ENCODE measurements at regions of chr2 and their contacts with region 1.

Region 1: GRCh38 chr2:102010902-102011301 is 19.1 kb downstream of the IL1R2 start:
- DNase-seq: no peak
- H3K4me3 ChIP-seq: no peak overlapping the region
- H3K27ac ChIP-seq: peak overlapping the region in 2 of 4 donors; percentile 1 to 24
- H3K4me1 ChIP-seq: peaks cover 4 to 12% (median 5%) of the 10 kb centered on the region in 3 donors
- H3K27me3 ChIP-seq: no peaks in the 10 kb centered on the region
- CTCF ChIP-seq: no peak
- POLR2A ChIP-seq: no peak

Region 2: DNA sequence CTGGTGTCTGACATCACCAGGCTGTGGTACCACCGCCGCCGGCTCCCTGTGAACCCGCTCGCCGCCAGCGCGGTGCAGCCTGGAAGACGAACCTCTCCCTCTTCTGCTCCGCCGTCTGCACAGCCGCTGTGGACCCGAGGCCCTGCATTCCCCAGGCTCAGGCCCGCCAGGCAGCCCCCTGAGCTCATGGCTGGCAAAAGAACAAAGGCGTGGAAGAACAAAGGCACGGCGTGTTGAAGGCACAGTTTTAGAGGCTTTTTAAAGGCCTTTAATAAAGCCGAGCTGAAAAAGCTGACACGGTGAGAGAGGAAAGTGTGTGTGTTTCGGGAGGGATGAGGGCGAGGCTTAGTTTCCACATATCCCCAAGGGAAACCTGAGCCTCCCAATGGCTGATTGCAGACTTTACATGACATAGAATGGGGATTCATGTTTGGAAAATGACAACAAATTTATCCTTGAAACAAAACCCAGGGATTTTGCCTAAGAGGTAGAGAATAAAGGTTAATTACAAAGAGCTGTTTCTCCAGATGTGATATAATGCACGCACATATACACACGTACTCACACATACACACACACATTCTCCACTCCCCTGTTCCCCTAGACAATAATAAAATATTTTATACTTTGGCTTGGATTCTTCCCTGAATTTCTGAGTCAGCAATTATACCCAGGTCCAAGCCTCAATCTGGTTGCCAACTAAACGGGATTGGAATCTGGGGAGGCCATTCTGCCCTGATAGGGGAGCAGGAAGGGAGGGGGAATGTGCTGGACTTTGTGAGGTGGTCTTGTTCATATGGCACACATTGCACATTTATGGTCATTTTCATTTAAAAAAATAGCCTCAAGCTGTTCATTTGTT is 575.7 kb before region 1 on chr2:
- intact Hi-C with region 1: no loop called
- DNase-seq: no peak
- H3K4me3 ChIP-seq: peak overlapping the region in 1 of 4 donors; percentile 34
- H3K27ac ChIP-seq: no peak overlapping the region
- H3K4me1 ChIP-seq: peaks cover 0 to 13% (median 9%) of the 10 kb centered on the region in 3 donors
- H3K27me3 ChIP-seq: no peaks in the 10 kb centered on the region
- CTCF ChIP-seq: no peak
- POLR2A ChIP-seq: no peak

Region 3: GRCh38 chr2:101883863-101884262 is 127.0 kb before region 1 on chr2:
- intact Hi-C with region 1: loop called (anchors 10 kb)
- DNase-seq: no peak
- H3K4me3 ChIP-seq: no peak overlapping the region
- H3K27ac ChIP-seq: no peak overlapping the region
- H3K4me1 ChIP-seq: peaks cover 0 to 32% (median 0%) of the 10 kb centered on the region in 3 donors
- H3K27me3 ChIP-seq: no peaks in the 10 kb centered on the region
- CTCF ChIP-seq: peak; percentile 19 to 82 (median 76)
- POLR2A ChIP-seq: no peak

Region 4: GRCh38 chr2:101972621-101973434 is 38.1 kb before region 1 on chr2:
- intact Hi-C with region 1: no loop called
- DNase-seq: no peak
- H3K4me3 ChIP-seq: no peak overlapping the region
- H3K27ac ChIP-seq: peak overlapping the region in 3 of 4 donors; percentile 19 to 57 (median 42)
- H3K4me1 ChIP-seq: peaks cover 6 to 49% (median 6%) of the 10 kb centered on the region in 3 donors
- H3K27me3 ChIP-seq: peaks cover 0 to 4% (median 0%) of the 10 kb centered on the region in 4 donors
- CTCF ChIP-seq: no peak
- POLR2A ChIP-seq: no peak

Measured in esophagus squamous epithelium (tissue), 5 donors.